ENCODE measurements at regions of chr6 and their contacts with region 1.

Region 1: GRCh38 chr6:104771258-104771832 is 88.4 kb downstream of the HACE1 start:
- DNase-seq: peak in 2 of 3 donors; percentile 50 to 56
- H3K4me3 ChIP-seq: no peak overlapping the region
- H3K27ac ChIP-seq: no peak overlapping the region
- H3K4me1 ChIP-seq: peaks cover 0 to 12% (median 7%) of the 10 kb centered on the region in 4 experiments
- H3K27me3 ChIP-seq: no peaks in the 10 kb centered on the region

Region 2: DNA sequence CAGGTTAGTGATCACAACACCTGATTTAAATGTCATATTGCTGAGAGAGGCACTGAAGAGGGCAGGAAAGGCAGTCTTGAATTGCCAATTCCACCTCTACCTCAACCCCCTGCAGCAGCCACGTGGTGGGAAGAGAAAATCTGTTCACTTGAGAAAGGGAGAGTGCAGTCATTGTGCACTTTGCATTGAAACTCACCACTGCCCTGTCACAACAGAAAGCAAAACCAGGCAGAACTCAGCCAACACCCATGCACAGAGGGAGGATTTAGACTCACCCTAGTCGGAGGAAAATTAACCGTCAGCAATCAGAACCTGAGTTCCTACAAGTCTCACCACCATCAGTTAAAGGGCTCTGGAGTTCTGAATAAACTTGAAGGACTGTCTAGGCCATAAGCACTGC is 951.8 kb before region 1 on chr6:
- CTCF ChIA-PET with region 1: no interaction called
- POLR2A ChIA-PET with region 1: no interaction called
- DNase-seq: no peak
- H3K4me3 ChIP-seq: no peak overlapping the region
- H3K27ac ChIP-seq: no peak overlapping the region
- H3K4me1 ChIP-seq: no peaks in the 10 kb centered on the region
- H3K27me3 ChIP-seq: no peaks in the 10 kb centered on the region

Region 3: GRCh38 chr6:104525677-104526312 is 245.6 kb before region 1 on chr6:
- CTCF ChIA-PET with region 1: interaction called, 17 read pairs
- POLR2A ChIA-PET with region 1: no interaction called
- DNase-seq: peak; percentile 74 to 86 (median 85)
- H3K4me3 ChIP-seq: peak overlapping the region in 5 of 7 experiments; percentile 13 to 76 (median 52)
- H3K27ac ChIP-seq: no peak overlapping the region
- H3K4me1 ChIP-seq: peaks cover 0 to 23% (median 6%) of the 10 kb centered on the region in 4 experiments
- H3K27me3 ChIP-seq: no peaks in the 10 kb centered on the region

Region 4: DNA sequence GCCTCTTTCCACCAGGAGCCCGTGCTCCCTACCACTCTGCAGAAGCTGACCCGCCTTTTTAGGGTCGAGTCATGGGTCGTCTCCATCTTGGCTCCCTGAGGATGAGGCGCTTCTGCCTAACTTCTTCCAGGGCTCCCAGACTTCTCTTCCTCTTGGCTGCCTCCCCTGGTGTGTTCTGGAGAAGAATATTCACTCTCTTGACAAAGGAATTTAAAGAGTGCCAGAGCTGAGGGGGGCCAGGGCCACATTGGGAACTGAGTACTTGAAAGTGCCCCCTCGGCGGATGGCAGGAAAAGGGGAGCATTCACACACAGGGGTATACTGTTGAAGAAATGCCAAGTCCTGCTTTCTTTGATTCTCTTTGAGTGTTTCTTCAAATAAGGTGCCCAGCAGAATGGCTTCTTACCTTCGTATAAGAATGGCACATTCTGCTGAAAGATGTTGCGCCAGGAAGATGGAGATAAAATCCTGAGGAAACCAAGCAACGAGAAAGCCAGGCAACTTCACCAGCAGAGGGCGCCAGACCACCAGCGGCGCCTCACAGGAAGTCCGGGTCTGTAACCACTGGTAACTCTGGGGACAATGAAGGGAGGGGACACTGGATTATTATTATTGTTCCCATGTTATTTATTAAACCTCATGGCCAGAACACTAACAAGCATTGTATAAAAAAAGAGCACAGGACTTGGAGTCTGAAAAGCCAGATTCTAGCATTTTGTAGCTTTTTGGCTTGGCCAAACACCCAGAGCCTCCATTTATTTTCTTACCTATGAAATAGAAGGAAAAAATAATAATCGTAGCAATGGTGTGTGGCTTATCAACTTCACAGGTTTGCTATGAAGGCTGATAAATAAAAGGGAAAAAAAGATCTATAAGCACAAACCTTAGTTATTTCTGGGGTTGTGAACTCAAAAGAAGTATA is 88.4 kb before region 1 on chr6:
- CTCF ChIA-PET with region 1: interaction called, 23 read pairs
- POLR2A ChIA-PET with region 1: no interaction called
- DNase-seq: peak; percentile 51 to 68 (median 64)
- H3K4me3 ChIP-seq: no peak overlapping the region
- H3K27ac ChIP-seq: no peak overlapping the region
- H3K4me1 ChIP-seq: peaks cover 8 to 27% (median 16%) of the 10 kb centered on the region in 4 experiments
- H3K27me3 ChIP-seq: no peaks in the 10 kb centered on the region

Region 5: GRCh38 chr6:105500693-105501092 is 729.3 kb after region 1 on chr6:
- CTCF ChIA-PET with region 1: no interaction called
- POLR2A ChIA-PET with region 1: no interaction called
- DNase-seq: no peak
- H3K4me3 ChIP-seq: no peak overlapping the region
- H3K27ac ChIP-seq: no peak overlapping the region
- H3K4me1 ChIP-seq: no peaks in the 10 kb centered on the region
- H3K27me3 ChIP-seq: no peaks in the 10 kb centered on the region